AG04450 (cell line): ENCODE measurements at regions of chr19 and their contacts with region 1.

Region 1: DNA sequence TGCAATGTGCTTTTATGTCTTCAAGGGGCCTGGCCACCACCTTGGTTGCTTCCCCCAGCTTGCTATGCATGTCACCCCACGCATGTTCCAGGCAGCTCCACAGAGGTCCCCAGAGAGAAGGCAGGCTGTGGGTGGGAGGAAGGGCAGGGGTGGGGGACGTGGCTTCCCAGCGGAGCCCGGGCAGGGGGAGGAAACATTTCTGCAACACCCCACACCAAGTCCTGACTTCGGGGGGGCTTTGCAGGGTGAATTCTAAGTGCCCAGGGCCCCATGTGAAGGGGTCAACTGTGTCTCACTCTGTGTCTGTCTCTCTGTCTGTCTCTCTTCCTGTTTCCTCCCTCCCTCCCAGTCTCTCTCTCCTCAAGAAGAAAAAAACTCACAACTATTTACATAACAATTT is 39.6 kb downstream of the LTBP4 start:
- DNase-seq: no peak
- H3K4me3 ChIP-seq: no peak overlapping the region
- H3K27ac ChIP-seq: peak overlapping the region; percentile 54
- H3K27me3 ChIP-seq: no peaks in the 10 kb centered on the region
- CTCF ChIP-seq: no peak

Region 2: DNA sequence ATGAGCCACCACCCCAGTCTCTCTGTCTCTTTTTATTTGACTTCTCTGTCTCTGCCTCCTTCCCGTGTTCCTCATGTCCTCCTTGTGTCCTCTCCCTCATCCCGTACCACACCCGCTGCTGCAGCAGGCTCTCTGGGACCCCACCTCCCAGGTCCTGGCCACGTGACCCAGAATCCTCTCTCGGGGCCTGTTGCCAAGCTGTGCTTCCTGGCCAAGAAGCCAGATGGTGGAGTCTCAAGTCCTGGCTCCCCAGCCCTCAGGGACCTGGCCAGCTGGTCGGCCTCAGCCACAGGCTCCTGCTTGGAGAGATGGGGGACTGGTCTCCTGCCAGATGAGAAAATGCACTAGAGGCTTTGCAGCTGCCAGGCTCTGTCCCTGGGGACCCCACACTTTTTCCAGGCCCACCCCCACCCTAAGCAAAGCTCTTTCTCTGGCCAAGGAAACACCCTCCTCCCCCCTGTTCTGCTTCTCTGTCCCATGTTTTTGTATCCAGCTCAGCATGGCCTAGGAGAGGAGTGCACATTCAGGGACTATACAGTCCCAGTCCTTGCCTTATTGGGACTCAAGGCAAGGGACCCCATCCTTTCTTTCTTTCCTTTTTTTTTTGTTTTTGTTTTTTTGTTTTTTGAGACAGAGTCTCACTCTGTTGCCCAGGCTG is 98.4 kb before region 1 on chr19:
- CTCF ChIA-PET with region 1: interaction called, 21 read pairs
- POLR2A ChIA-PET with region 1: interaction called, 7 read pairs
- DNase-seq: peak; percentile 61
- H3K4me3 ChIP-seq: no peak overlapping the region
- H3K27ac ChIP-seq: no peak overlapping the region
- H3K27me3 ChIP-seq: peaks cover 6% of the 10 kb centered on the region
- CTCF ChIP-seq: no peak

Region 3: GRCh38 chr19:40549007-40549708 is 91.6 kb before region 1 on chr19:
- CTCF ChIA-PET with region 1: interaction called, 11 read pairs
- POLR2A ChIA-PET with region 1: no interaction called
- DNase-seq: peak; percentile 6
- H3K4me3 ChIP-seq: no peak overlapping the region
- H3K27ac ChIP-seq: no peak overlapping the region
- H3K27me3 ChIP-seq: peaks cover 24% of the 10 kb centered on the region
- CTCF ChIP-seq: peak; percentile 43

Region 4: DNA sequence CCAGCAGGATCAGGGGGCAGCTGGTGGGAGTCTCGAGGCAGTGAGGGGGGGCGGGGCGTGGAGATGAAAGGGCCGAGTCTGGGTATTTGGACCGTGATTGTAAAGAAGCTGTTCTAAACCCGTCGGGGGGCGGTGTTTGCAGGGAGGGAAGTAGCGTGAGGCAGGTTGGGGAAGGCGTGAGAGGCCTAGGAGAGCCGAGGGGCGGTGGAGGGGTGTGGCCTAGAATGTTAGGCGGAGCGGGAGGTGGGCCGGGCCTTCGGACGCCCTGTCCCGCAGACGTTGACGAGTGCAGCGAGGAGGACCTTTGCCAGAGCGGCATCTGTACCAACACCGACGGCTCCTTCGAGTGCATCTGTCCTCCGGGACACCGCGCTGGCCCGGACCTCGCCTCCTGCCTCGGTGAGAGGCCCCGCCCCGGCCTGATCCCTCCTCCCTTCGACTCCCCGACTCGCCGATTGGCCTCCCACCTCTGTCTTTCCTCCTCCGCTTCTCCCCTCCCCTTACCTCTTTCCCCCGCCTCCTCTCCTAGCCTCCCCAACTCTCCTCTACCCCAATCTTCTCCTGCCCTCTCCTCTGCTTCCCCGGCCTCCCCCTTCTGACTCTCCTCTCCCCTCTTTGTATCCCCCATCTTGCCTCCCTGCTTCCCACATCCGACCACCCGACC is 27.0 kb before region 1 on chr19:
- CTCF ChIA-PET with region 1: interaction called, 117 read pairs
- POLR2A ChIA-PET with region 1: interaction called, 31 read pairs
- DNase-seq: peak; percentile 67
- H3K4me3 ChIP-seq: peak overlapping the region; percentile 88
- H3K27ac ChIP-seq: peak overlapping the region; percentile 95
- H3K27me3 ChIP-seq: no peaks in the 10 kb centered on the region
- CTCF ChIP-seq: no peak

Region 5: DNA sequence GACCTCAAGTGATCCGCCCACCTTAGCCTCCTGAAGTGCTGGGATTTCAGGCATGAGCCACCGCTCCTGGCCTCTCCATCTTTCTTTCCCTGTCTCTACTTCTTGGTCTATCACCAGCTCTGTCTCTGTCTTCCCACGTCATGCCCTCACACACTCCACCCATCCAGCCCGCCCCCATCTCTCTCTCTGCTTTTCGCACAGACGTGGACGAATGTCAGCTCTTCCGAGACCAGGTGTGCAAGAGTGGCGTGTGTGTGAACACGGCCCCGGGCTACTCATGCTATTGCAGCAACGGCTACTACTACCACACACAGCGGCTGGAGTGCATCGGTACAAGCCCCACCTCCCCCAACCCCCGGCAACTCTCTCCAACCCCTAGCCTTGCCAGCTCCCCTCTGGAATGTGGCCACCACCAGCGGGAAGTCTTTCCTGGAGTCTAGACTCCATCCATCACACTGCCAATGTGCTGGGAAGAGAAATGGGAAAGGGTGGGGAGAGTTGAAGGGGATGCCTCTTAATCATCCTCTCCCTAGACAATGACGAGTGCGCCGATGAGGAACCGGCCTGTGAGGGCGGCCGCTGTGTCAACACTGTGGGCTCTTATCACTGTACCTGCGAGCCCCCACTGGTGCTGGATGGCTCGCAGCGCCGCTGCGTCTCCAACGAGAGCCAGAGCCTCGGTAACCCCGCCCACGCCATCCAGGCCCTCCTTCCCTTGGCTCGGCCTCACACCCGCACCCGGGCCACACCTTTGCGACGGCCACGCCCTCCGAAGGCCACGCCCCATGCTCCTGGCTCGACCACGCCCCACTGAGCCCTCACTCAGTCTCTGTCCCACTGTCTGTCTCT is 17.1 kb before region 1 on chr19:
- CTCF ChIA-PET with region 1: interaction called, 117 read pairs
- POLR2A ChIA-PET with region 1: interaction called, 12 read pairs
- DNase-seq: no peak
- H3K4me3 ChIP-seq: no peak overlapping the region
- H3K27ac ChIP-seq: no peak overlapping the region
- H3K27me3 ChIP-seq: no peaks in the 10 kb centered on the region
- CTCF ChIP-seq: no peak